Activated B cell treated with CpG ODN at 0.5 μM for 24 hours (primary cell): ENCODE measurements at regions of chr10 and their contacts with region 1.

Region 1: DNA sequence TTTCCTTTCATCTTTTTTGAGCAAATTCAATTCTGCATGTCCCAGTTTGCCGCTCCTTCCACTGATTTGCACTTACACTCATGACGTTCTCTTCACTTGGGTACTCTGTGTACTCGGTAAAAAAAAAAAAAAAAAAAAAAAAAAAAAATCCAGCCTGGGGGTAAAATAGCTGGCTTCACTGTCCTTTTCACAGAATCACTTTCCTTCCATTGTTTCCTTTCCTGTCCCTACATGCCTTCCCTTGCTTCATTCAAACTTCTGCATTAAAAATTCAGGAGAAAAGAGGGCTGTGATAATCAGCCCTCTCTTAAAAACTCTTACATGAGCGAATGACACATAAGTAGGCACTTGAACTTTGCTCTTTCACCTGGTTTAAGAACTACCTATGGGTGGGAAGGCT is 8.7 kb downstream of the ANKRD1 start:
- DNase-seq: no peak
- ATAC-seq: no peak
- H3K4me3 Mint-ChIP-seq: no peak overlapping the region
- H3K27ac Mint-ChIP-seq: no peak overlapping the region
- H3K4me1 Mint-ChIP-seq: peaks cover 19% of the 10 kb centered on the region
- H3K27me3 Mint-ChIP-seq: no peaks in the 10 kb centered on the region
- CTCF ChIP-seq: no peak

Region 2: GRCh38 chr10:90741926-90742565 is 170.1 kb before region 1 on chr10:
- CTCF ChIA-PET with region 1: no interaction called
- POLR2A ChIA-PET with region 1: no interaction called
- intact Hi-C with region 1: no loop called
- DNase-seq: no peak
- ATAC-seq: no peak
- H3K4me3 Mint-ChIP-seq: no peak overlapping the region
- H3K27ac Mint-ChIP-seq: no peak overlapping the region
- H3K4me1 Mint-ChIP-seq: no peaks in the 10 kb centered on the region
- H3K27me3 Mint-ChIP-seq: peaks cover 12% of the 10 kb centered on the region
- CTCF ChIP-seq: no peak

Region 3: DNA sequence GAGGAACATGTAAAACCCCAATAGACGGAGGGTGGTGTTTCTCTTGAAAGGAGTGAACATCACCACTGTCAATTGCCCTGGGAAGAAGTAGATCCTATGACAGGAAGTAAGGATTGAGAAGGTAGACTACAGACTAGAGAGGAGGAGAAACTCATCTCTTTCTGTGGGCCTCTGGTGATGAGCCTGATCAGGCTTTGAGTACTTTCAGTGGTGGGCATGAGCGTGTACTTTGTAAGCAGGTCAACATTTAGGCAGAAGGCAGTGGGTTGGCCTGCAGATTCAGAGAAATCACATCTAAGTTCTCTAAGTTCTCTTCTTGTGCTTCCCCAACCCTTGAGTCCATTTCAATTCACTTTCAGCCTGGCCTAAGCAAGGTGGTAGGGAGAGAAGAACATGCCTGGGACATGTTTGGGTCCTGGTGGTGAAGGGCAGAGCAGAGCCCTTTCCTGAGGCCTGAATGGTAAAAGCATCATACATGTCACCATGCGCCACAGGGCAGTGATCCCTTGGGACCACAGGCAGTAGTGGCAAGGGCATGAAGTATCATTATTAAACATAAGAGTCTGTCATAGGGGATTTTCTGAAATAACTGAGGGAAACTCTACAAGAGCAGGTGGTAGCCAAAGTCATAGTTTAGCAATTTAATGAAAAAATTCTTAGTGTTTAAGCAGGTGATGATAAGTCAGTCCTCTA is 65.1 kb after region 1 on chr10:
- CTCF ChIA-PET with region 1: interaction called, 7 read pairs
- POLR2A ChIA-PET with region 1: no interaction called
- intact Hi-C with region 1: loop called (anchors 1 kb)
- DNase-seq: peak; percentile 48
- ATAC-seq: peak; percentile 94
- H3K4me3 Mint-ChIP-seq: peak overlapping the region; percentile 46
- H3K27ac Mint-ChIP-seq: peak overlapping the region; percentile 86
- H3K4me1 Mint-ChIP-seq: peaks cover 38% of the 10 kb centered on the region
- H3K27me3 Mint-ChIP-seq: no peaks in the 10 kb centered on the region
- CTCF ChIP-seq: no peak

Region 4: GRCh38 chr10:90987383-90987782 is 75.2 kb after region 1 on chr10:
- CTCF ChIA-PET with region 1: no interaction called
- POLR2A ChIA-PET with region 1: no interaction called
- intact Hi-C with region 1: no loop called
- DNase-seq: no peak
- ATAC-seq: no peak
- H3K4me3 Mint-ChIP-seq: no peak overlapping the region
- H3K27ac Mint-ChIP-seq: no peak overlapping the region
- H3K4me1 Mint-ChIP-seq: peaks cover 28% of the 10 kb centered on the region
- H3K27me3 Mint-ChIP-seq: no peaks in the 10 kb centered on the region
- CTCF ChIP-seq: no peak

Region 5: GRCh38 chr10:90999512-91000172 is 87.5 kb after region 1 on chr10:
- CTCF ChIA-PET with region 1: interaction called, 80 read pairs
- POLR2A ChIA-PET with region 1: interaction called, 9 read pairs
- intact Hi-C with region 1: no loop called
- DNase-seq: no peak
- ATAC-seq: peak; percentile 80
- H3K4me3 Mint-ChIP-seq: peak overlapping the region; percentile 56
- H3K27ac Mint-ChIP-seq: peak overlapping the region; percentile 93
- H3K4me1 Mint-ChIP-seq: peaks cover 63% of the 10 kb centered on the region
- H3K27me3 Mint-ChIP-seq: no peaks in the 10 kb centered on the region
- CTCF ChIP-seq: no peak

Region 6: GRCh38 chr10:91088300-91089140 is 176.3 kb after region 1 on chr10:
- CTCF ChIA-PET with region 1: interaction called, 34 read pairs
- POLR2A ChIA-PET with region 1: interaction called, 4 read pairs
- intact Hi-C with region 1: loop called (anchors 1 kb)
- DNase-seq: no peak
- ATAC-seq: peak; percentile 69
- H3K4me3 Mint-ChIP-seq: no peak overlapping the region
- H3K27ac Mint-ChIP-seq: no peak overlapping the region
- H3K4me1 Mint-ChIP-seq: peaks cover 6% of the 10 kb centered on the region
- H3K27me3 Mint-ChIP-seq: no peaks in the 10 kb centered on the region
- CTCF ChIP-seq: no peak